ENCODE measurements at regions of chr10 and their contacts with region 1.

Region 1: DNA sequence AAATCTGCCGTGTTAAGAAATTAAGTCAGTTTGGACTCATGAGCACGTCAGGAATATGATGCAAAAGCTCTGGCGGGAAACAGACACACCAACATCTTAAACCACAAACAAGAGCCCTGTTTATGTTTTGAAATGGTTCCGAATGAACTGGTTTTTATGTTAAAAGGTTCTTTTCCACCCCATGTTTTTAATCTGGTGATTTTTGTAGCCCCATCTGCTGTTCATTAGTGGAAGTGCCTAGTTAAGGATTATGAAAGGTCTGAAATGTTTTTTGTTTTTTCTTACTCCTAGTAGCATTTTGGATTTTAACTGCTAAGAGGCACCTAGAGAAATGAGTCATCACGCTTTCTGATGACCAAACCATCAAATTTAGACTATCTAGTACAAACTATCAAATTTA is 404.1 kb upstream of the MKI67 start:
- DNase-seq: no peak
- ATAC-seq: no peak
- H3K4me3 ChIP-seq: no peak overlapping the region
- H3K27ac ChIP-seq: no peak overlapping the region
- H3K4me1 ChIP-seq: no peaks in the 10 kb centered on the region
- H3K27me3 ChIP-seq: peaks cover 0 to 3% of the 10 kb centered on the region in 2 experiments; a peak in 2 of 4 replicates
- CTCF ChIP-seq: peak; percentile 24 to 45 (median 43); a peak in 4 of 6 replicates
- EP300 ChIP-seq: no peak
- POLR2A ChIP-seq: no peak
- RAD21 ChIP-seq: peak; percentile 27; the same call in 1 of the 2 replicates

Region 2: DNA sequence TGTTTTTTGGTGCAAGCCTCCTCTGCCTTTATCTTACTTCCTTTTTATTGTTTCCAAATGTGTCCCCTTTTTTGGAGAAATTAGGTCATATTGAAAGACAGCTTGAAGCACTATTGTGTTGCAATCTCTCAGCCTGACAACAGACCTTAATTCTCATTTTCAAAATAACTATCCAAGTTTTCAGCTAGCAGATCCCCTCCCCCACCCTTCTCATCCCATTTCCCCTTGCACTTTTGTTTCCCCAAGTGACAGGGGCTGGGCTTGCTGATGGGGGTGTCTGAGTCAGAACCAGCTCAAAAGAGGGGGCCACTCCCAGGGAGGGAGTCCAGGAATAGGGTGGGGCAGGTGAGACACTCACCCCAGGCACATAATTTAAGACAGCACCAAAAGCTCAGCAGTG is 479.4 kb before region 1 on chr10:
- CTCF ChIA-PET with region 1: no interaction called
- POLR2A ChIA-PET with region 1: no interaction called
- RAD21 ChIA-PET with region 1: no interaction called
- SMC1A ChIA-PET with region 1: no interaction called
- in situ Hi-C with region 1: no loop called
- intact Hi-C with region 1: no loop called
- DNase-seq: no peak
- ATAC-seq: no peak
- H3K4me3 ChIP-seq: no peak overlapping the region
- H3K27ac ChIP-seq: no peak overlapping the region
- H3K4me1 ChIP-seq: peaks cover 26% of the 10 kb centered on the region
- H3K27me3 ChIP-seq: no peaks in the 10 kb centered on the region
- CTCF ChIP-seq: no peak
- EP300 ChIP-seq: no peak
- POLR2A ChIP-seq: no peak
- RAD21 ChIP-seq: no peak

Region 3: GRCh38 chr10:128337860-128338378 is 192.4 kb before region 1 on chr10:
- CTCF ChIA-PET with region 1: no interaction called
- POLR2A ChIA-PET with region 1: no interaction called
- RAD21 ChIA-PET with region 1: no interaction called
- SMC1A ChIA-PET with region 1: no interaction called
- in situ Hi-C with region 1: no loop called
- intact Hi-C with region 1: loop called (anchors 10 kb)
- DNase-seq: no peak
- ATAC-seq: no peak
- H3K4me3 ChIP-seq: no peak overlapping the region
- H3K27ac ChIP-seq: no peak overlapping the region
- H3K4me1 ChIP-seq: no peaks in the 10 kb centered on the region
- H3K27me3 ChIP-seq: no peaks in the 10 kb centered on the region
- CTCF ChIP-seq: no peak
- EP300 ChIP-seq: no peak
- POLR2A ChIP-seq: no peak
- RAD21 ChIP-seq: no peak